Transverse colon (tissue), 4 donors: ENCODE measurements at regions of chrX and their contacts with region 1.

Region 1: GRCh38 chrX:133804072-133804471 is 181.3 kb downstream of the GPC3 start:
- DNase-seq: no peak
- H3K4me3 ChIP-seq: no peak overlapping the region
- H3K27ac ChIP-seq: no peak overlapping the region
- H3K4me1 ChIP-seq: no peaks in the 10 kb centered on the region
- H3K27me3 ChIP-seq: no peaks in the 10 kb centered on the region
- CTCF ChIP-seq: no peak
- EP300 ChIP-seq: no peak
- POLR2A ChIP-seq: no peak

Region 2: DNA sequence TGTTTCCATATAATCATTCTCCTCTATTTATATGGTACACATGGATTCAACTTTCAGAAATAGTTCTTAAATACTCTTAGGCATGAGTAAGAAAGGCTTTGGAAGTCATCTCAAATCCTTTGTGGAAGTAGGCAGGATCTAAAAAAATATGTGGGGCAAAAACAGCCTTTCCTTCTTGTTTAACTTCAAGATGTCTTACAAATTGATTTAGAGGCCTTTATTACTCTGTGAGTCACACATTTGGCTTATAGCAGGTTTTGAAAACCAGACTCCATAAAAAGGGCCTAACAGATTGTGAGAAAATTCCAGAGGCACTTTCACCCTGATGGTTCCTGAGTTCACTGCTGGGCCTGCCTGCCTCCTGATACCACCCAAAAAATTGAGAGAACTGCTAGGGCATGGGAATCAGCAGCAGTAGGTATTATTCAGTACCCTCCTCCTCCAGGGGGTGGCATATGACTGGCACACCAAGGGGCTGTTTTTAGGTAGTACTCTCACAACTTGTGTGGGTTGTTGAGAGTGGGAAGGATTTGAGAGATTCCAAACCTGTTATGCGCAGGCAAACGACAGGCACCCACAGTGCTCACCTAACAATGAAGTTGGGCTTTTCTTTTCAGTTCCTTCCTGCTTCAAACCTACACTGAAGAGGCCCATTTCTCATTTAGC is 1152.5 kb before region 1 on chrX:
- in situ Hi-C with region 1: no loop called
- intact Hi-C with region 1: no loop called
- DNase-seq: no peak
- H3K4me3 ChIP-seq: no peak overlapping the region
- H3K27ac ChIP-seq: no peak overlapping the region
- H3K4me1 ChIP-seq: no peaks in the 10 kb centered on the region
- H3K27me3 ChIP-seq: no peaks in the 10 kb centered on the region
- CTCF ChIP-seq: no peak
- EP300 ChIP-seq: no peak
- POLR2A ChIP-seq: no peak

Region 3: GRCh38 chrX:133815496-133815895 is 11.4 kb after region 1 on chrX:
- in situ Hi-C with region 1: no loop called
- intact Hi-C with region 1: loop called (anchors 1 kb)
- DNase-seq: no peak
- H3K4me3 ChIP-seq: no peak overlapping the region
- H3K27ac ChIP-seq: no peak overlapping the region
- H3K4me1 ChIP-seq: no peaks in the 10 kb centered on the region
- H3K27me3 ChIP-seq: no peaks in the 10 kb centered on the region
- CTCF ChIP-seq: no peak
- EP300 ChIP-seq: no peak
- POLR2A ChIP-seq: no peak